ENCODE measurements at regions of chr12 and their contacts with region 1.

Region 1: DNA sequence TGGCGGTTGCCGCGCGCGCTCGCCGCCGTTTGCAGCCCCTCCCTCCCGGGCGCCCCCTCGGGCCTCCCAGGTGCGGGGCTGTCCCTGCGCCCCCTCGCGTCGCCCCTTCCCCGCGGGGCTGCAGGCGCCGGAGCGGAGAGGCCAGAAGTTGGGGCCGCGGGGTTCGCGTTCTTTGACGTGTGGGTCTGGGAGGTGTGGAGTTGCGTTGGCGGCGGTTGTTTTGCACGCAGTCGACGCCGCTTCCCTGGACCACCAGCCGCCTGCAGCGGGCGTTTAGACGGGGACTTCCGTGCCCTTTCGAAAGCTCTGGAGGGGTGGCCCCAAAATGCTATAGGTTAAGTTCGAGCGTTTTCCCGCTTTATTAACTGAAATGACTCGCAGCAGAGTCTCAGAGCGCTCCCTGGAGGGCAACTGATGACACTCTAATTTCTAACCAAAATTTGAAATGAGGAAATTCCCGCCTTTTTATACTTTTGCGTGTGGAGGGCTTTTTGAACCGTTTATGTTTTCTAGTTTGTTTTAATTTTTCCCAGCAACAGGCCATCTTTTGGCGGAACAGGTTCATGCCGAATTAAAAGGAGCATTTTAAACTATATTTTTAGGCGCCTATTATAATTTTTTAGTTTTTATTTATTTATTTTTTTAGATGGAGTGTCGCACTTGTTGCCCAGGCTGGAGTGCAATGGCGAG is 939 bp downstream of the TMPO start:
- DNase-seq: peak in 2 of 4 experiments; percentile 73 to 94
- ATAC-seq: peak; percentile 66
- H3K4me3 ChIP-seq: peak overlapping the region; percentile 66
- H3K27ac ChIP-seq: peak overlapping the region; percentile 98
- H3K4me1 ChIP-seq: peaks cover 16 to 21% of the 10 kb centered on the region in 2 experiments; a peak in 4 of 5 replicates
- H3K27me3 ChIP-seq: no peaks in the 10 kb centered on the region
- CTCF ChIP-seq: peak; percentile 74 to 93 (median 78)
- EP300 ChIP-seq: peak; percentile 75
- POLR2A ChIP-seq: no peak; the same call in none of the 2 replicates
- RAD21 ChIP-seq: peak; percentile 71 to 88

Region 2: GRCh38 chr12:98188650-98189077 is 327.7 kb before region 1 on chr12:
- CTCF ChIA-PET with region 1: no interaction called
- POLR2A ChIA-PET with region 1: no interaction called
- in situ Hi-C with region 1: no loop called
- intact Hi-C with region 1: no loop called
- DNase-seq: no peak
- ATAC-seq: no peak
- H3K4me3 ChIP-seq: no peak overlapping the region
- H3K27ac ChIP-seq: no peak overlapping the region
- H3K4me1 ChIP-seq: no peaks in the 10 kb centered on the region
- H3K27me3 ChIP-seq: no peaks in the 10 kb centered on the region
- CTCF ChIP-seq: no peak
- EP300 ChIP-seq: no peak
- POLR2A ChIP-seq: no peak
- RAD21 ChIP-seq: no peak

Region 3: DNA sequence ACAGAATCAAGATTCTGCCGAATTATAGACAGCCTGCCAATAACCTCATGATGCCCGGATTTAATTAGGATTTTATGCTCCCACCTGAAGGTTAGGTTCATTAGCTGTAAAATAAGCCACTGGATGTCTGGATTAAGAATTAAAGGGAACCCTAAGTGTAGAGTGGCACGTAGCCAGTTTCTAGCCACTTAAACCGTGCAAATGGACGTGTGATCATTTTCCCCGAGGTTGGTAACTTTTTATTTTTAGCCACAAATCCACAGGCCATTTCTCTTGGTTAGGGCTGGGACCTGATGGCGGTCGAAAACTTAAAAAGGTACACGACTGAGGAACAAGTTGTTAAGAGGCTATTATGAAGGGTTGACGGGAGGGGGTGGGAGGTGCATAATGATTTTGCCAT is 128.2 kb before region 1 on chr12:
- CTCF ChIA-PET with region 1: no interaction called
- POLR2A ChIA-PET with region 1: no interaction called
- in situ Hi-C with region 1: no loop called
- intact Hi-C with region 1: no loop called
- DNase-seq: no peak
- ATAC-seq: no peak
- H3K4me3 ChIP-seq: no peak overlapping the region
- H3K27ac ChIP-seq: no peak overlapping the region
- H3K4me1 ChIP-seq: no peaks in the 10 kb centered on the region
- H3K27me3 ChIP-seq: peaks cover 7 to 9% of the 10 kb centered on the region in 2 experiments; a peak in 4 of 5 replicates
- CTCF ChIP-seq: no peak
- EP300 ChIP-seq: no peak
- POLR2A ChIP-seq: no peak
- RAD21 ChIP-seq: no peak

Region 4: GRCh38 chr12:98418357-98419075 is 97.8 kb before region 1 on chr12:
- CTCF ChIA-PET with region 1: interaction called, 8 read pairs
- POLR2A ChIA-PET with region 1: no interaction called
- in situ Hi-C with region 1: no loop called
- intact Hi-C with region 1: loop called (anchors 2 kb)
- DNase-seq: peak; percentile 37 to 60 (median 45)
- ATAC-seq: peak; percentile 71
- H3K4me3 ChIP-seq: no peak overlapping the region
- H3K27ac ChIP-seq: no peak overlapping the region
- H3K4me1 ChIP-seq: peaks cover 0 to 5% of the 10 kb centered on the region in 2 experiments; a peak in 4 of 5 replicates
- H3K27me3 ChIP-seq: peaks cover 3 to 41% of the 10 kb centered on the region in 2 experiments; a peak in 4 of 5 replicates
- CTCF ChIP-seq: no peak
- EP300 ChIP-seq: no peak
- POLR2A ChIP-seq: no peak
- RAD21 ChIP-seq: no peak

Region 5: GRCh38 chr12:98424726-98425401 is 91.5 kb before region 1 on chr12:
- CTCF ChIA-PET with region 1: interaction called, 19 read pairs
- POLR2A ChIA-PET with region 1: interaction called, 3 read pairs
- in situ Hi-C with region 1: no loop called
- intact Hi-C with region 1: loop called (anchors 2 kb)
- DNase-seq: peak; percentile 60 to 78 (median 74)
- ATAC-seq: peak; percentile 91
- H3K4me3 ChIP-seq: no peak overlapping the region
- H3K27ac ChIP-seq: no peak overlapping the region
- H3K4me1 ChIP-seq: peaks cover 3 to 7% of the 10 kb centered on the region in 2 experiments; a peak in 2 of 5 replicates
- H3K27me3 ChIP-seq: peaks cover 3 to 38% of the 10 kb centered on the region in 2 experiments; a peak in 4 of 5 replicates
- CTCF ChIP-seq: peak; percentile 73 to 83 (median 76)
- EP300 ChIP-seq: no peak
- POLR2A ChIP-seq: no peak
- RAD21 ChIP-seq: peak; percentile 71 to 79

Region 6: DNA sequence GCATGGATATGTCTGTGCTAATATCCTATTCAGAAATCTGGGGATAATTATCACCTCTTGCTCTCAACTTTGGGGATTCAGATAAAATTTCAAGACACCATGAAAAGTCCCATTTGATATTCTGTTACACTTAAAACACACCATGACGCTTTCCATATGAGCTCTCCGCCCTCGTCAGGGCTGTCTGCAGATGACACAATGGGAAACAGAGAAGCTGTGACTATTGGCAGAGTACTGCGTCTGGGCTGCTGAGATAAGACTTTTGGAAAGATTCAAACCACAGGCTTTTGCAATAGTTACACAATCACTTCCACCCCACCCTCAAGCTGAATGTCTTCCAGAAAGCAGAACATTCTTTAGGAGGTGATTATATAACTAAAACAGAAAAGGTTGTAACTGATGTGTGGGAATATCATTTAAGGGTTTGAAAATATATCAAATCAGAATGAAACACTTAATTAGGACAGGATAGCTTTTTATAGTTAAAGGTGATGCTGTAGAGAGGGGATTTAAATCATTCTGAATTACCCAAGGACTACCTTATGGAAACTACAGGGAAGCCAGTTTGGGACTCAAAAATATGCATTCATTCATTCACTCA is 76.2 kb before region 1 on chr12:
- CTCF ChIA-PET with region 1: no interaction called
- POLR2A ChIA-PET with region 1: no interaction called
- in situ Hi-C with region 1: no loop called
- intact Hi-C with region 1: loop called (anchors 5 kb)
- DNase-seq: peak; percentile 64 to 90 (median 76)
- ATAC-seq: peak; percentile 99
- H3K4me3 ChIP-seq: no peak overlapping the region
- H3K27ac ChIP-seq: no peak overlapping the region
- H3K4me1 ChIP-seq: peaks cover 0 to 4% of the 10 kb centered on the region in 2 experiments; a peak in 2 of 5 replicates
- H3K27me3 ChIP-seq: peaks cover 5 to 16% of the 10 kb centered on the region in 2 experiments; a peak in 4 of 5 replicates
- CTCF ChIP-seq: peak in 2 of 3 experiments; percentile 23 to 47; a peak in 3 of 6 replicates
- EP300 ChIP-seq: peak; percentile 98
- POLR2A ChIP-seq: no peak
- RAD21 ChIP-seq: peak; percentile 41 to 42; a peak in 3 of 4 replicates

Region 7: DNA sequence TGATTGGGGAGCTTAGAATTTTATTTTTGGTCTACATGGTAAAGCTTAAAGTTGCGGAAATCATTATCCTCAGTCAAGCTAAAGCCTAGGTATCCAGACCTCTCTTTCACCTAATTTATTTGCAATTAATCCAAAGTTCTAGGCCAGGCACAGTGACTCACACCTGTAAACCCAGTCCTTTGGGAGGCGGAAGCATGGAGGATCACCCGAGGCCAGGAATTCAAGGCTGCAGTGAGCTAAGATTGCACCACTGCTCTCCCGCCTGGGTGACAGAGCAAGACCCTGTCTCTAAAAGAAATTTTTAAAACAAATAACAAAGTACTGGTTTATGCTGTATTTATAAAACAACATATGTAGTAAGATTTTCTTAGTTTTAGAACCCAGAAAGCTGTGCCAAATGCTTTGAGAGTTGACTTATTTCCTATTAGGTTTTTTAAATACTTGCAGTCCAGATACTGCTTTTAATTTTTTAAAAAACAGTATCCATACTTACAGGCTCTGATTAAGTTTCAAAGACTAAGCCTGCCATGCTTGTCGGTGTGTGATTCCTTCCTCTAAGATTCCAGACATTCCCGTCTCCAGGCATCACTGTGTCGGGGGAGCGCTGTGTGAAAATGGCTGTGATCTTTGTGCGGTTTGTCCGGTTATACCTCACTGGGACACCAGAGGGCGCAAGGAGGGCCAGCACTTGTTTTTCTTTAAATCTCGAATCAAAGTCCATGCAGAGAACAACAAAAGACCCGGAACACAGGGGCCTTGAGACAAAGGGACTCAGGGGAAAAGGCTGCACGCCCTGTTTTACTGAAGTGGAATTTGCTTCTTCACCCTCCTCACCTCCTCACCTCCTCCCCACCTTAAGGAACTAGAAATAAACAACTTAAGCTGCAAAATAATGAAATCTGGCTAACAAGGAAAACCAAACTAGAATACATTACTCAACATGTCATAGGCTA is 25.6 kb before region 1 on chr12:
- CTCF ChIA-PET with region 1: interaction called, 14 read pairs
- POLR2A ChIA-PET with region 1: interaction called, 4 read pairs
- in situ Hi-C with region 1: no loop called
- intact Hi-C with region 1: loop called (anchors 1 kb)
- DNase-seq: peak; percentile 67 to 84 (median 74)
- ATAC-seq: peak; percentile 90
- H3K4me3 ChIP-seq: no peak overlapping the region
- H3K27ac ChIP-seq: no peak overlapping the region
- H3K4me1 ChIP-seq: peaks cover 0 to 5% of the 10 kb centered on the region in 2 experiments; a peak in 3 of 5 replicates
- H3K27me3 ChIP-seq: peaks cover 0 to 3% of the 10 kb centered on the region in 2 experiments; a peak in 1 of 5 replicates
- CTCF ChIP-seq: peak; percentile 87 to 90 (median 88)
- EP300 ChIP-seq: no peak
- POLR2A ChIP-seq: no peak
- RAD21 ChIP-seq: peak; percentile 80 to 81

Region 8: DNA sequence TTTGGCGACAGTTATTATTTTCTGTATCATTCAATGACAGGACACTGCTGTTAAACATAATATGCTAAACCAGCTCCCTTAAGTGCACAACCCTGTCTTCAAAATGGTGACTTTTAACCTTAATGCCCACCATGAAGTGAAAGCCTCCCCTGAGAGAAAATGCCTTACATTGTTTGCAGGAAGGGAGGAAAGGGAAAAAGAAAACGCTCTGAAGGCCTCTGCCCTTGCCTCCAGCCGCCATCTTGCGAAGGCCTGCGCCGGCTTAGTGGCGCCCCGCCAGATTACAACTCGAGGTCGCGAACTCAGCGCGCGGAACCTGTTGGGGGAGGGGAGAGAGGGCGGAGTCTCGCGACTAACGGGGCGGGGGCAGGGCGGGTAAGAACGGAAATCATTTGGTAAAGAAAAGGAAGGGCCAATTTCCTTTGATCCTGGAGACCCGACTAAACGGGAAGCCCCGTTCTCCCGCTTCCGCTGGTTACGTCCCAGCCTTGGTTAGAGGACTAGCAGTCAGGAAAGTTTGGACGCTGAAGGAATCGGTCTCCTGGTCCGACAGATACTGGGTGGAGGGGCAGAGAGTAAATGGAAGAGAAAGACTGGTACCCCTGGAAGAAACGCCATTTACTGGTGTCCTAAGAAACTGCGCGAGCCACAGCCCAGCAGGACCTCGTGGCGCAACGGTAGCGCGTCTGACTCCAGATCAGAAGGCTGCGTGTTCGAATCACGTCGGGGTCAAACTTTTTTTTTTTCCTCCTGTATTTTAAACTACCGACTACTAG is 12.5 kb before region 1 on chr12:
- CTCF ChIA-PET with region 1: no interaction called
- POLR2A ChIA-PET with region 1: interaction called, 8 read pairs
- in situ Hi-C with region 1: no loop called
- intact Hi-C with region 1: loop called (anchors 1 kb)
- DNase-seq: peak; percentile 84 to 96 (median 86)
- ATAC-seq: peak; percentile 86
- H3K4me3 ChIP-seq: peak overlapping the region; percentile 59
- H3K27ac ChIP-seq: peak overlapping the region; percentile 99
- H3K4me1 ChIP-seq: peaks cover 2 to 5% of the 10 kb centered on the region in 2 experiments; a peak in 3 of 5 replicates
- H3K27me3 ChIP-seq: no peaks in the 10 kb centered on the region
- CTCF ChIP-seq: 0 out of 6 replicates have a peak, but pooled peaks of 2 of the 3 experiments have one; percentile 1 to 2
- EP300 ChIP-seq: peak; percentile 64; the same call in 1 of the 2 replicates
- POLR2A ChIP-seq: peak; percentile 81
- RAD21 ChIP-seq: peak in 1 of 2 experiments; percentile 6; a peak in 1 of 4 replicates

Region 9: DNA sequence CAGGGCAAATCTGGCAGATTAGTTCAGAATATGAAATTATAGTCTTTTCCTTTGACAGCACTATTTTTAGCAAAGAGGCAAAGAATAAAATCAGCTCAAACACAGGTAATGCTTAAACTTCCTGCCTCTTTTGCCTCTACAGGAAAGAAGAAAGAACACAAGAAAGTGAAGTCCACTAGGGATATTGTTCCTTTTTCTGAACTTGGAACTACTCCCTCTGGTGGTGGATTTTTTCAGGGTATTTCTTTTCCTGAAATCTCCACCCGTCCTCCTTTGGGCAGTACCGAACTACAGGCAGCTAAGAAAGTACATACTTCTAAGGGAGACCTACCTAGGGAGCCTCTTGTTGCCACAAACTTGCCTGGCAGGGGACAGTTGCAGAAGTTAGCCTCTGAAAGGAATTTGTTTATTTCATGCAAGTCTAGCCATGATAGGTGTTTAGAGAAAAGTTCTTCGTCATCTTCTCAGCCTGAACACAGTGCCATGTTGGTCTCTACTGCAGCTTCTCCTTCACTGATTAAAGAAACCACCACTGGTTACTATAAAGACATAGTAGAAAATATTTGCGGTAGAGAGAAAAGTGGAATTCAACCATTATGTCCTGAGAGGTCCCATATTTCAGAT is 16.5 kb after region 1 on chr12:
- CTCF ChIA-PET with region 1: no interaction called
- POLR2A ChIA-PET with region 1: interaction called, 33 read pairs
- in situ Hi-C with region 1: no loop called
- intact Hi-C with region 1: loop called (anchors 1 kb)
- DNase-seq: peak; percentile 46 to 74 (median 50)
- ATAC-seq: peak; percentile 85
- H3K4me3 ChIP-seq: no peak overlapping the region
- H3K27ac ChIP-seq: no peak overlapping the region; the same call in 2 of the 3 replicates
- H3K4me1 ChIP-seq: peaks cover 0 to 12% of the 10 kb centered on the region in 2 experiments; a peak in 3 of 5 replicates
- H3K27me3 ChIP-seq: no peaks in the 10 kb centered on the region
- CTCF ChIP-seq: peak; percentile 67 to 83 (median 73)
- EP300 ChIP-seq: no peak
- POLR2A ChIP-seq: no peak
- RAD21 ChIP-seq: peak; percentile 57 to 62